AG04450 (cell line): ENCODE measurements at regions of chr19 and their contacts with region 1.

Region 1: GRCh38 chr19:32453736-32454135 is 48.2 kb downstream of the DPY19L3 start:
- DNase-seq: no peak
- H3K4me3 ChIP-seq: no peak overlapping the region
- H3K27ac ChIP-seq: no peak overlapping the region
- H3K27me3 ChIP-seq: no peaks in the 10 kb centered on the region
- CTCF ChIP-seq: no peak

Region 2: DNA sequence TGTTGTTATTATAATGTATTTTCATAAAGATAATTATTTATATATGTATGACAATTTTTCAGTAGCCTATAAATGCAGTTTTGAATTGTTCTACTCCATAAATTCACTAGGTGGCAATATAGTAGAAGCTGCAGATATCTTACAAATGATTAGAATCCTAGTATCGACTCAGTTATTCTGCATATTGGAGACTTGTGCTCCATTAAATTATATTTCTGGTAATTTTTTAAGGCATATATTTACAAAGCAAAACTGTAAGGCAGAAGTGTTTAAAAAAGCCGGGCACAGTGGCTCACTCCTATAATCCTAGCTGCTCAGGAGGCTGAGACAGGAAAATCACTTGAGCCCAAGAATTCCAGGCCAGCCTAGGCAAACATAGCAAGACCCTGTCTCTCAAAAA is 10.5 kb after region 1 on chr19:
- CTCF ChIA-PET with region 1: interaction called, 15 read pairs
- POLR2A ChIA-PET with region 1: no interaction called
- DNase-seq: no peak
- H3K4me3 ChIP-seq: no peak overlapping the region
- H3K27ac ChIP-seq: no peak overlapping the region
- H3K27me3 ChIP-seq: no peaks in the 10 kb centered on the region
- CTCF ChIP-seq: peak; percentile 49